HEK293T (cell line): ENCODE measurements at regions of chr1 and their contacts with region 1.

Region 1: GRCh38 chr1:183685112-183685713 is 32.1 kb upstream of the APOBEC4 start:
- DNase-seq: peak; percentile 78

Region 2: DNA sequence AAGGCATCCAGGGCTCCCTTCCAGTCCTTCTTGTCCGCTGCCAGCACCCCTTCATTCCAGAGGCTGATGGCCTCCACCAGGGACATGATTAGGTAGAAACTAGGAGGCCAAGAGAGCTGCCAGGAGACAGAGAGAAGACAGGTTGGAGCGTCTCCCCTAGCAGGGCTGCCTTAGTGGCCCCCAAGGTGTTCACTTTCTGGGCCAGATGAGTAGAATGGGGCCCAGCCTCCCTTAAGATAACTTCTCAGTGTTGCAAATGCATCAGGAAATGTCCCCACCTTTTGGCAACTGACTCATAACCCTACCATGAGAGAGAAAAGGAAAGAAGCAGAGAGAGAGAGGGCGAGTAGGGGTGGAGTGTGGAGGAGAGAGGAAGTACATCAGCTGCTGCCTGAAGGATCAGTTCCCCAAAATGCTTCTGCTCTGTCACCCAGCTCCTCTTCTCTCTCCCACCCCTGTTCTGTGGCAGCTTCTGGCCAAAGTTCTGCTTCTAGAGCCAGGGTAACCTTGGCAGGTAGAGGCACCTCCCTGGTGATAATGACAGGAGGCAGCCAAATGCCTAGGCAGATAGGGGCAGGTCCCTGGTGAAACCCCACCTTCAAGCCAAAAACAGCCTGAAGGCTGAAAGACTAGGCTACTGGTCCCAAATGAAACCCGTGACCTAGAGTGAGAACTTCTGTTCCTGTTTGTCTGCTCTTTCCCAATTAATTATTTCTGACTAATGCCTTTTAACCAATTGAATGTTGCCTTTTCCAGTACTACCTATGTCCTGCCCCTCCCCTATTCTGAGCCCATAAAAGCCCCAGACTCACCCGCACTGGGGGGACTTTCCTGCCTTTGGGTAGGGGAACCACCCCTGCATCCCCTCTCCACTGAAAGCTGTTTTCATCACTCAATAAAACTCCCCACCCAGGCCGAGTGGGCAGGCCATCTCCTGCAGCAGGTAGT is 94.7 kb before region 1 on chr1 and contains the start of gene NCF2:
- CTCF ChIA-PET with region 1: no interaction called
- POLR2A ChIA-PET with region 1: no interaction called
- DNase-seq: no peak

Region 3: GRCh38 chr1:183655562-183656075 is 29.6 kb before region 1 on chr1:
- CTCF ChIA-PET with region 1: interaction called, 22 read pairs
- POLR2A ChIA-PET with region 1: interaction called, 3 read pairs
- DNase-seq: peak; percentile 83